ENCODE measurements at regions of chr18 and their contacts with region 1.

Region 1: GRCh38 chr18:77985526-77986281 is 736.1 kb downstream of the GALR1 start:
- DNase-seq: no peak
- ATAC-seq: no peak

Region 2: DNA sequence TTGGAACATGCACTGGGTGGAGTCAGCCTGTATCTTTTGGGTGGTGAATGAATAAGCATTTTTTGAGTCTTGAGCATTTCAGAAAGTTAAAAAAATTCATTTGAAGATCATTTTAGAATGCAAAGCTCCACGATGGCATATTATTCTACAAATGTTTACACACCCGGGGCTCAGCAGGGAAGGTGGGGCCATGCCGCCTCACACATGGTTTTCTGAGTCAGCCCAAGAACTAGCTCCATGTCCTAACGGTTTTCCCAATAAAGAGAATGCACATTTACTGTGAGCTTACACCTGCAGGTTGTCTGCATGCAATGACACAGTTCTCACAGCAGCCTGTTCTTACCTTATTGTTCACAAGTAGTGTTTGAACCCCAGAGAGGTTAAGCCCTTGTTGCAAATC is 65.8 kb before region 1 on chr18:
- intact Hi-C with region 1: loop called in 1 of 2 experiments (anchors 10 kb)
- DNase-seq: no peak
- ATAC-seq: no peak

Measured in left colon (tissue), 2 donors.